Activated B cell treated with CpG ODN at 0.5 μM for 24 hours (primary cell): ENCODE measurements at regions of chrX and their contacts with region 1.

Region 1: GRCh38 chrX:47560831-47561652 is at the start of gene ARAF:
- DNase-seq: peak; percentile 77
- ATAC-seq: peak; percentile 88
- H3K4me3 Mint-ChIP-seq: peak within 1 kb of the TSS; percentile 89
- H3K27ac Mint-ChIP-seq: peak within 1 kb of the TSS; percentile 96
- H3K4me1 Mint-ChIP-seq: peaks cover 44% of the 10 kb centered on the region
- H3K27me3 Mint-ChIP-seq: no peaks in the 10 kb centered on the region
- CTCF ChIP-seq: no peak
- total RNA-seq, gene ARAF: 97.2 and 108 TPM in 2 replicates

Region 2: GRCh38 chrX:47144626-47145394 is 416.2 kb before region 1 on chrX and contains the starts of genes NDUFB11 and RBM10:
- CTCF ChIA-PET with region 1: no interaction called
- POLR2A ChIA-PET with region 1: interaction called, 10 read pairs
- intact Hi-C with region 1: loop called (anchors 1 kb)
- DNase-seq: peak; percentile 73
- ATAC-seq: peak; percentile 90
- H3K4me3 Mint-ChIP-seq: peak within 1 kb of the TSS; percentile 96
- H3K27ac Mint-ChIP-seq: peak within 1 kb of the TSS; percentile 97
- H3K4me1 Mint-ChIP-seq: peaks cover 30% of the 10 kb centered on the region
- H3K27me3 Mint-ChIP-seq: no peaks in the 10 kb centered on the region
- CTCF ChIP-seq: no peak
- total RNA-seq, gene NDUFB11: 73.3 and 88.0 TPM in 2 replicates
- total RNA-seq, gene RBM10: 54.9 and 55.6 TPM in 2 replicates

Region 3: DNA sequence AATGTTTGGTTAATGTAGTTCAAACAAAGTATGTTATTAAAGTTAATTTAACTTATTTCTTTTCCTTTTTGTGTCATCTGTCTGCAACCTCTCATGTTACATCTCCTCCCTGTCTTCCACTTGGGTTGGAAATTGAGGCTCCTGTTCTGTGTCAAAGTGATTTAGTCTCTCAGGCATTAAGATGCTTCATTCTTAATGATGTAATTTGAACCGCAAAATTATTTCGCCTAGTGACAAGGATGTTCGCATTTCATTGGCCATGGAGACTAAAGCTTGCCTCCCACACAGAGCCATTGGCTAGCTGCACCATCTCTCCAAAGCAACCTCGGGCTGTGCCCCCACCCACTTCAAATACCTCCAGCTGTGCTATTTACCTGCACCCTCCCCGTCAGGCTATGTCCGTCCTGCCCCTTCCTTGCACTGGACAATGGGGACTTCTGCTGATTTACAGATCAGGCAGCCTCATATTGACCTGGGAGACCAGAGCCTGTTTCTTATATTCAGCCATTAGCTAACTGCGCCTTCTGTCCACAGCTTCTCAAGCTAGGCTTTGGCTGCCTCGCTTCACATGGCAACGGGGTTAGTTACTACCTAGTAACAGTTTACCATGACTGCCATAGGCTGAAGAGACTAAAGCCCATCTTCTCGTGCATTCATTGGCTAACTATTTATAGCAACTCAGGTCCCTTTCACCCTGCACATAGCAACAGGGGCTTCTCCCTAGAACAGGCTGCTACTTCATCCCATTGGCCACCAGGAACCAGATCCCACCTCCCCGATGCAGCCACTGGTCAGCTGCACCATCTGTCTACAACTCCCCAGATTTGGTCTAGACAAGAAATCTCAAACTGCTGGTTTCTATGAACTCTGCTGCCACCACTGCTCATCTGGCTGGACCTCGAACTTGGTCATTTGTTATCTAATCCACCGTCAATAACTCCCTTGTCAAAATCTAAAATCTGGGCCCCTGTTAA is 199.2 kb before region 1 on chrX:
- CTCF ChIA-PET with region 1: no interaction called
- POLR2A ChIA-PET with region 1: interaction called, 3 read pairs
- intact Hi-C with region 1: loop called (anchors 1 kb)
- DNase-seq: peak; percentile 51
- ATAC-seq: peak; percentile 79
- H3K4me3 Mint-ChIP-seq: peak overlapping the region; percentile 87
- H3K27ac Mint-ChIP-seq: peak overlapping the region; percentile 97
- H3K4me1 Mint-ChIP-seq: peaks cover 31% of the 10 kb centered on the region
- H3K27me3 Mint-ChIP-seq: no peaks in the 10 kb centered on the region
- CTCF ChIP-seq: no peak

Region 4: DNA sequence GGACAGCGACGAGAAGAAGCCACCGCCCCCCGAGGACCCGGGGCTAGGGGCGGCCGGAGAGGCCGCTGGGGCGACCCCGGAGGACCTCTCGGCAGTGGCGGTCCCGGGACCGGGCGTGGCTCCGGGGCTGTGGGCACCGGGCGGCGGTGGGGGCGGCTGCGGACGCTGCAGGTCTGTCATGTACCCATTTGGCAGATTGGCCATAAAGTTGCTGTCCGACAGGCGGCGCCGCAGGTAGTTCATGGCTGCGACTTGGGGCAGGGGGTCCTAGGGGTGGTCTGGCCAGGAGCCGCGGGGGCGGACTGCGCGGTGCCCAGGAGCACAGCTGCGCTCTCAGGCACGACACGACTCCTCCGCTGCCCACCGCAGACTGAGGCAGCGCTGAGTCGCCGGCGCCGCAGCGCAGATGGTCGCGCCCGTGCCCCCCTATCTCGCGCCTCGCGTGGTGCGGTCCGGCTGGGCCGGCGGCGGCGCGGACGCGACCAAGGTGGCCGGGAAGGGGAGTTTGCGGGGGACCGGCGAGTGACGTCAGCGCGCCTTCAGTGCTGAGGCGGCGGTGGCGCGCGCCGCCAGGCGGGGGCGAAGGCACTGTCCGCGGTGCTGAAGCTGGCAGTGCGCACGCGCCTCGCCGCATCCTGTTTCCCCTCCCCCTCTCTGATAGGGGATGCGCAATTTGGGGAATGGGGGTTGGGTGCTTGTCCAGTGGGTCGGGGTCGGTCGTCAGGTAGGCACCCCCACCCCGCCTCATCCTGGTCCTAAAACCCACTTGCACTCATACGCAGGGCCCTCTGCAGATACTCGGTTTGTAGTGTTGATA is 58.7 kb after region 1 on chrX and contains the start of gene SYN1:
- CTCF ChIA-PET with region 1: no interaction called
- POLR2A ChIA-PET with region 1: no interaction called
- intact Hi-C with region 1: loop called (anchors 2 kb)
- DNase-seq: peak; percentile 62
- ATAC-seq: peak; percentile 93
- H3K4me3 Mint-ChIP-seq: peak within 1 kb of the TSS; percentile 53
- H3K27ac Mint-ChIP-seq: no peak within 1 kb of the TSS
- H3K4me1 Mint-ChIP-seq: peaks cover 16% of the 10 kb centered on the region
- H3K27me3 Mint-ChIP-seq: peaks cover 45% of the 10 kb centered on the region
- CTCF ChIP-seq: no peak
- total RNA-seq, gene SYN1: not detected in 2 replicates

Region 5: GRCh38 chrX:47637546-47638195 is 76.6 kb after region 1 on chrX:
- CTCF ChIA-PET with region 1: no interaction called
- POLR2A ChIA-PET with region 1: no interaction called
- intact Hi-C with region 1: loop called (anchors 5 kb)
- DNase-seq: no peak
- ATAC-seq: peak; percentile 96
- H3K4me3 Mint-ChIP-seq: peak overlapping the region; percentile 63
- H3K27ac Mint-ChIP-seq: peak overlapping the region; percentile 79
- H3K4me1 Mint-ChIP-seq: peaks cover 12% of the 10 kb centered on the region
- H3K27me3 Mint-ChIP-seq: no peaks in the 10 kb centered on the region
- CTCF ChIP-seq: no peak

Region 6: GRCh38 chrX:47658684-47659515 is 97.9 kb after region 1 on chrX and contains the start of gene UXT:
- CTCF ChIA-PET with region 1: no interaction called
- POLR2A ChIA-PET with region 1: no interaction called
- intact Hi-C with region 1: loop called (anchors 1 kb)
- DNase-seq: peak; percentile 82
- ATAC-seq: peak; percentile 85
- H3K4me3 Mint-ChIP-seq: peak within 1 kb of the TSS; percentile 91
- H3K27ac Mint-ChIP-seq: peak within 1 kb of the TSS; percentile 99
- H3K4me1 Mint-ChIP-seq: peaks cover 18% of the 10 kb centered on the region
- H3K27me3 Mint-ChIP-seq: no peaks in the 10 kb centered on the region
- CTCF ChIP-seq: no peak
- total RNA-seq, gene UXT: 184 and 201 TPM in 2 replicates